ENCODE measurements at regions of chr10 and their contacts with region 1.

Region 1: GRCh38 chr10:73159038-73159648 is 8.7 kb downstream of the ECD start:
- DNase-seq: peak; percentile 68
- ATAC-seq: peak; percentile 68
- H3K4me3 Mint-ChIP-seq: no peak overlapping the region
- H3K27ac Mint-ChIP-seq: no peak overlapping the region
- H3K4me1 Mint-ChIP-seq: peaks cover 32% of the 10 kb centered on the region
- H3K27me3 Mint-ChIP-seq: no peaks in the 10 kb centered on the region

Region 2: GRCh38 chr10:73060738-73061635 is 98.2 kb before region 1 on chr10:
- CTCF ChIA-PET with region 1: interaction called, 12 read pairs
- POLR2A ChIA-PET with region 1: no interaction called
- DNase-seq: no peak
- ATAC-seq: peak; percentile 53
- H3K4me3 Mint-ChIP-seq: no peak overlapping the region
- H3K27ac Mint-ChIP-seq: no peak overlapping the region
- H3K4me1 Mint-ChIP-seq: peaks cover 11% of the 10 kb centered on the region
- H3K27me3 Mint-ChIP-seq: no peaks in the 10 kb centered on the region

Region 3: GRCh38 chr10:73136627-73137026 is 22.5 kb before region 1 on chr10:
- CTCF ChIA-PET with region 1: interaction called, 17 read pairs
- POLR2A ChIA-PET with region 1: no interaction called
- DNase-seq: no peak
- ATAC-seq: no peak
- H3K4me3 Mint-ChIP-seq: no peak overlapping the region
- H3K27ac Mint-ChIP-seq: no peak overlapping the region
- H3K4me1 Mint-ChIP-seq: no peaks in the 10 kb centered on the region
- H3K27me3 Mint-ChIP-seq: no peaks in the 10 kb centered on the region

Measured in activated CD8-positive, alpha-beta T cell treated with anti-CD3 and anti-CD28 coated beads, Interleukin-2, amount 10 ng/mL, durations not matched to agents 7 days and 5 days (primary cell).